ENCODE measurements at regions of chr7 and their contacts with region 1.

Region 1: DNA sequence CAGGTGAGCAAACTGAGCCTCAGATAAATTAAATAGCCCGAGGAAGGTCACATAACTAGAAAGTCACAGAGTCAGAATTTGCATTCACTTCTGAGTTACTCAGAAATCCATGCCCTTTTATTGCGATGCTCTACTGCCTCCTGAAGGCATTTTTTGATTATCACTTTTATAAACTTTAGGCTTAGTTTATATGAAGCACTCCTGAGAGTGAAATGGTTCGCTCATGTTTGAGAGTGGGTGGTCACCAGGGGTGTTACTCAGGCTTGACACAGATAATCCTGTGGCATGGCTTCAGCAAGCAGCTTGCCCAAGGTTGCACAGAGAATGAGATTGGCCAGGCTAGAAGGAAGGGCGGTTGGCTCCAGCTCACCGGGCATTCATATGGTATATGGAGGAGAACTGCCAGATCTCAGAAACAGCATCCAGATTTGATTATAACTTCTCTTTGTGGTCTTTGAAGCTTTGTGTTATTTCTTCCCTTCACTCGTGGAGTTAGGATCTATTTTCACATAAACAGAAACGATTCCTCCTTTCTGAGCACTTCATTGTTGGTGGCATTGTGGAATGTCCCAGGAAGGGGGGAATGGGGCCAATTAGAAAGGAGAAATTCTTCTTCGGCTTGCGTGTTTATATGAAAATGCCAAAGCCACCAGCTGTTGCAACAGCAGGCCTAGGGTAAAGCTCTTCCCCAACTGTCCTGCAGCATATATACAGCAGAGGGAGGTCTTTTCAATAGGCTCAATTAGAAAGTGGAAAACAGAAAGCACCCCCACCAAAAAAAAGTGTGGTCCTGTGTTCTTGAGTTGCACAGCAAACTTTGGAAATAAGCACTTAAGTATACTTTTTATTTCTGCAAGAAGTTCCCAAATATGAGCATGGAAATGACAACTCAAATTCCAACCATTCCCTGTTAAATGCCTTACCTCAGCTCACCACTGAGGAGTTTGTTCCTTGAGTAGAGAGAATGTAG is 628.8 kb downstream of the SUGCT start:
- DNase-seq: peak; percentile 86
- ATAC-seq: peak; percentile 87
- H3K4me3 ChIP-seq: peak overlapping the region; percentile 34; the same call in 1 of the 2 replicates
- H3K27ac ChIP-seq: peak overlapping the region; percentile 91
- H3K4me1 ChIP-seq: peaks cover 6% of the 10 kb centered on the region
- H3K27me3 ChIP-seq: no peaks in the 10 kb centered on the region
- CTCF ChIP-seq: peak; percentile 60
- POLR2A ChIP-seq: no peak
- RAD21 ChIP-seq: peak; percentile 78

Region 2: GRCh38 chr7:40199076-40199802 is 564.4 kb before region 1 on chr7:
- CTCF ChIA-PET with region 1: no interaction called
- POLR2A ChIA-PET with region 1: no interaction called
- dilution Hi-C with region 1: no loop called
- in situ Hi-C with region 1: no loop called
- intact Hi-C with region 1: loop called (anchors 1 kb)
- DNase-seq: peak; percentile 63
- ATAC-seq: peak; percentile 79
- H3K4me3 ChIP-seq: no peak overlapping the region
- H3K27ac ChIP-seq: no peak overlapping the region
- H3K4me1 ChIP-seq: peaks cover 11% of the 10 kb centered on the region
- H3K27me3 ChIP-seq: no peaks in the 10 kb centered on the region
- CTCF ChIP-seq: peak; percentile 61
- POLR2A ChIP-seq: no peak
- RAD21 ChIP-seq: peak; percentile 71

Region 3: GRCh38 chr7:40329601-40330153 is 433.9 kb before region 1 on chr7:
- CTCF ChIA-PET with region 1: interaction called, 3 read pairs
- POLR2A ChIA-PET with region 1: no interaction called
- dilution Hi-C with region 1: no loop called
- in situ Hi-C with region 1: loop called (anchors 5 kb)
- intact Hi-C with region 1: loop called (anchors 1 kb)
- DNase-seq: peak; percentile 74
- ATAC-seq: peak; percentile 69
- H3K4me3 ChIP-seq: no peak overlapping the region
- H3K27ac ChIP-seq: no peak overlapping the region
- H3K4me1 ChIP-seq: peaks cover 2% of the 10 kb centered on the region; the same call in 1 of the 2 replicates
- H3K27me3 ChIP-seq: no peaks in the 10 kb centered on the region
- CTCF ChIP-seq: peak; percentile 80
- POLR2A ChIP-seq: no peak
- RAD21 ChIP-seq: peak; percentile 95

Region 4: DNA sequence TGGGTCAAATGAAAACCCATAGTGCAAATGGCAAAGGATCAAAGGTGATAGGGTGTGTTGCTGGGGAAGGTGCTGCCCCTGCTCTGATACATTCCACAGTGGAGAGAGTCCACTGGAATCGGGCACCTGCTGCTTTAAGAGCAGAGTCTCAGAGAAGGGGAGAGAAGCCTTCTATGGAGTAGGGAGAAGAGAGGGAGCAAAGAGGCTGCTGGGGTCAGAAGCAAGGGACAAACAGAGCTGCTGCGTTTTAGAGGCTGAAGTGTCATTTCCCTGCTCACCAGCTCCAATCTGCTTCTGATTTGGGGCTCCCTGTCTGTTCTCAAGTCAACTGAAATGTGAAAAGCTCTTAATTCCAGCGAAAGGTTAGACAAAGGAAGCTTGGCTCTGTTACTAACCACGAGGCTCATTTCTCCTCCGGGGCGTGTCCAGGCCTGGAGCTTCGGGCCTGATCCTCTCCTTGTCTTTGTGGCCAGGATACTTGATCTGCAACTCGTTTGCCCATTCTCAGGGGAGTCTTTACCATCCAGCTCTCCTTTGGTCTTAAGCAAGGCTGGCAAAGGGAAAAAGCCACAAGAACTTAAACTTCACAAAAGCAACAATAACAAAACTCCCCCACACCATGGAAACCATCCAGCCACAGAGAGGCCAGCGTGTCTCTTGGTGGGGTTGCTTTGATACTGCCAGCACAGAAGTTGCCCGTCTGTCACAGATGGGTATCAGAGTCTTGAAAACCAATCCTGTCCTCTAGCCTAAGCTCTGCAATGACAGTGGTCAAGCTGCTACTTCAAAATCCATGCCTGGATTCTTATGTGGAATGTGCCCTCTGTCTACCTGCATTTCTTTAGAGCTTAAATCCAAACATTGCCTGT is 63.8 kb after region 1 on chr7:
- CTCF ChIA-PET with region 1: interaction called, 6 read pairs
- POLR2A ChIA-PET with region 1: no interaction called
- dilution Hi-C with region 1: no loop called
- in situ Hi-C with region 1: no loop called
- intact Hi-C with region 1: loop called (anchors 2 kb)
- DNase-seq: no peak
- ATAC-seq: peak; percentile 30
- H3K4me3 ChIP-seq: no peak overlapping the region
- H3K27ac ChIP-seq: peak overlapping the region; percentile 85
- H3K4me1 ChIP-seq: peaks cover 16% of the 10 kb centered on the region
- H3K27me3 ChIP-seq: no peaks in the 10 kb centered on the region
- CTCF ChIP-seq: no peak
- POLR2A ChIP-seq: no peak
- RAD21 ChIP-seq: no peak

Region 5: DNA sequence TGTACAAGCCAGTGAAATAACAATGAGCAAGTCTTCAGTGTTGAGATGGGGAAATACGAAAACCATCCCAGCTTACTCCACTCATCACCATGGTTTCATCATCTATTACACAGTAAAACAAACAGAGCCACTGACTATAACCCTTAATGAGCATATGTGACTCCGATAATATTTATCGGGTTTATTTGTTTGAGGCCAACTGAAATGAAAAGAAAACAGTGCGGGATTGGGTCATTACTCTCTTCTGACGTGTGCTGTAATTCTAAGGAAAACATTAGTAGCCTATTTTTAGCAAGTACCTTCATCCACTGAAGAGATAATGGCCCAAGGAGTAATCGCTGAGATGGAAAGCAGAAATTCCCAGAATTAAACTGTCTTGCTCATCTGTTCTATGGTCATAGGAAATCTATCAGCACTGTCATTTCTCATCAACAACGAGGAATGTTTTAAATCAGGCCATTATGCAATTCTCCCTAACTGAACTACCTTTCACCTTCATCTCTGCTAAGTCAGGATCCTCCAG is 222.8 kb after region 1 on chr7:
- CTCF ChIA-PET with region 1: no interaction called
- POLR2A ChIA-PET with region 1: no interaction called
- dilution Hi-C with region 1: no loop called
- in situ Hi-C with region 1: no loop called
- intact Hi-C with region 1: loop called (anchors 10 kb)
- DNase-seq: peak; percentile 98
- ATAC-seq: peak; percentile 92
- H3K4me3 ChIP-seq: no peak overlapping the region
- H3K27ac ChIP-seq: no peak overlapping the region
- H3K4me1 ChIP-seq: peaks cover 8% of the 10 kb centered on the region
- H3K27me3 ChIP-seq: no peaks in the 10 kb centered on the region
- CTCF ChIP-seq: no peak
- POLR2A ChIP-seq: no peak
- RAD21 ChIP-seq: no peak; the same call in 1 of the 2 replicates

Measured in IMR-90 (cell line).